ENCODE measurements at regions of chr22 and their contacts with region 1.

Region 1: GRCh38 chr22:19679522-19680101 is 34.7 kb upstream of the SEPTIN5 start:
- DNase-seq: peak in 1 of 2 donors; percentile 25
- ATAC-seq: peak; percentile 56 to 75
- H3K4me3 ChIP-seq: no peak overlapping the region
- H3K27ac ChIP-seq: no peak overlapping the region
- H3K4me1 ChIP-seq: no peaks in the 10 kb centered on the region
- H3K27me3 ChIP-seq: peaks cover 0 to 9% (median 0%) of the 10 kb centered on the region in 3 donors
- CTCF ChIP-seq: peak; percentile 74 to 94 (median 92)
- POLR2A ChIP-seq: no peak

Region 2: DNA sequence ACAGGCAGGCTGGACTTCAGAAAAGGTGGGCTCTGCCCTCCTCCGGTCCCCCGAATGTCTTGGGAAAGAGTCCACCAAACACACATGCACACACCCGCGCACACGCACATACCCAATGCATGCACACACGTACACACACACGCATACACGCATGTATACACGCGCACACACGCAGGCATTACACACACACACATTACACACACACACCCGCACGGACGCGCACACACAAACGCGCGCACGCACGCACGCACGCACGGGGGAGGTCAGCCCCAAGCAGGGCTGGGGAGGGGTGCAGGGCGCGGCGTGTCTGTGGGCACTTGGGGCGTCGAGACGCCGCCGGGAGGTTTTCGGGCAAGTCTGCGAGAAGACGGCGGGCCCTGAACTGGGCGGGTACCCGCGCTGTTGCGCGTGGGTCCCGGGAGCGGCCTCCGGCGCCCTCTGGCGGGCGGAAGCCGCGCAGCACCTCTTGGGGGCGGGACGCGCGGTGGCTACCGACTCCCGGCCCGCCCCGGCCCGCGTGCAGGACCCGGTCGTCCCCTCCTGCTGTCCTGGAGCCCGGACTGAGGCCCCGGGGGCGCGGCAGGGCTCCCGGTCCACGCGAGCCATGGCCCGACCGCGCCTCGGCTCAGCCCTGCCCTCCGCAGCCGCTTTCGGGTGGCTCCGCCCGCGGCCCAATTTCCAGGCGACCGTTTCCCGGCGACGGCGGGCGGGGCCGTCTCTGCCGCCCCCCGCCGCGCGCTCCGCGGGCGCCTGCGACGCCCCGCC is 38.3 kb after region 1 on chr22:
- in situ Hi-C with region 1: loop called in 1 of 4 experiments (anchors 5 kb)
- intact Hi-C with region 1: loop called (anchors 1 kb)
- DNase-seq: peak; percentile 43 to 60
- ATAC-seq: peak; percentile 85
- H3K4me3 ChIP-seq: peak overlapping the region; percentile 51 to 62 (median 60)
- H3K27ac ChIP-seq: peak overlapping the region in 2 of 4 donors; percentile 43 to 45
- H3K4me1 ChIP-seq: peaks cover 4 to 18% of the 10 kb centered on the region in 2 donors
- H3K27me3 ChIP-seq: peaks cover 0 to 13% (median 4%) of the 10 kb centered on the region in 3 donors
- CTCF ChIP-seq: peak; percentile 88 to 100 (median 98)
- POLR2A ChIP-seq: no peak